ENCODE measurements at regions of chr5 and their contacts with region 1.

Region 1: DNA sequence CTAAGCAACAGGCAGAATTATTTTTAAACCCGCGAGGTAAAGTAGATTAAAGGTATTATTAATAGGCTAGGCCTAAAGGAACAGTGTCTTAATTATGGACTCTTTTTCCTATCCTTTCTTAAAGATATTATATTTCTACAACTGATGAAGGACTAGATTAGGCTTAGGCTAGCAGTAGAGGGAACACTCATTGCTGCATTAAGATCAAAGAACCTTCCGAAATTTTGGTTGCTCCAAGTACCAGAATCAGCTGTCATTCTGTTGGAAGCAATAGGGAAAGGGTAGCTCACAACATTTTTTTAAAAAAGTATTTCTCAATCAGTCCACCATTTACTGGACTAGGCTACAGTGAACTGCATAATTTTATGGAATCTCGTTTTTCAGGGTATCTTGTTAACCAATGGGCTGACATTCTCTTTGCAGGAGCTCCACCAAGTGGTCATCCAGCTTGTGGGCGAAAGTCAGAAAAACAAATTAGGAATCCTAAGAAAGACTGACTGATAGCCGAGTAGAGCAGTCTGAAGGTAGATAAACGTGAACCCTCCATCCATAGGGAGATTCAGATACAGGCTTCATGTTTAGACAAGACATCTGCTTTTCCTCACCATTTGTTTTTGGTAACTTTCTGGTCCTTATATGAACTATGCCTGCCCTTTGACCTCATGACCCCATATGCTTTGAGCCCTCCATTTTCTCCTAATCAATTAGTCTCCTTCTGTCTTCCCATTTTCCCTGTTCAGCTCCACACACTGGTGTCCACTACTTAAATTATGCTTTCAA is 103.6 kb upstream of the CHD1 start:
- DNase-seq: no peak
- ATAC-seq: peak; percentile 82

Region 2: GRCh38 chr5:98905857-98906690 is 126.3 kb before region 1 on chr5:
- intact Hi-C with region 1: loop called (anchors 1 kb)
- DNase-seq: no peak
- ATAC-seq: no peak

Measured in Right ventricle myocardium inferior (tissue), 1 donor.